Panc1 (cell line): ENCODE measurements at regions of chr2 and their contacts with region 1.

Region 1: GRCh38 chr2:85707304-85707703 is 13.1 kb downstream of the GNLY start:
- DNase-seq: peak; percentile 90
- ATAC-seq: peak; percentile 93
- H3K4me3 ChIP-seq: no peak overlapping the region
- H3K27ac ChIP-seq: no peak overlapping the region
- H3K4me1 ChIP-seq: peaks cover 6% of the 10 kb centered on the region; the same call in 1 of the 2 replicates
- H3K27me3 ChIP-seq: peaks cover 2% of the 10 kb centered on the region; the same call in 1 of the 2 replicates
- CTCF ChIP-seq: peak; percentile 88

Region 2: DNA sequence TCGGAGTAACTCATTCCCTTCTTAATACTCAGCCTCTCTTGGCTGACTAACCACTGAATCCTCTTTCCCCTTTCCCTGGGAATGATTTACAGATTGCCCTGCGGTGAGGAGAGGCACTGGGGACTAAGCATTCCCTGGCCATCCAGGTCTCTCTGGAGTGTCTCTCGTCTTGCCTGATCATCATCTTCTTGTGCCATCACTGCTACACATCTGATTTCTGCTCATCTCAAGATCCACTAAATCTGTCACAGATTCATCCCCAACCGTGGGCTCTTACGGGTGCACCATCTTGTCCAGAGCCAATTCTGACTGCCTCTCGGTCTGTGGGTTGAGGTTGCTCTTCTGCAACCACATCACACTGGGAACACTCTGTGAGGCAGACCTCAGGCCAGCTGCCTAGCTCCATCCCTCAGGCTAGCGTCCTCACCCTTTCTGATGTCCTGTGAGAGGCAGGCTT is 51.3 kb before region 1 on chr2:
- CTCF ChIA-PET with region 1: no interaction called
- POLR2A ChIA-PET with region 1: no interaction called
- in situ Hi-C with region 1: loop called (anchors 5 kb)
- intact Hi-C with region 1: no loop called
- DNase-seq: no peak
- ATAC-seq: no peak
- H3K4me3 ChIP-seq: no peak overlapping the region
- H3K27ac ChIP-seq: no peak overlapping the region
- H3K4me1 ChIP-seq: no peaks in the 10 kb centered on the region
- H3K27me3 ChIP-seq: no peaks in the 10 kb centered on the region
- CTCF ChIP-seq: no peak

Region 3: GRCh38 chr2:85678794-85679672 is 28.3 kb before region 1 on chr2:
- CTCF ChIA-PET with region 1: interaction called, 25 read pairs
- POLR2A ChIA-PET with region 1: no interaction called
- in situ Hi-C with region 1: no loop called
- intact Hi-C with region 1: loop called (anchors 2 kb)
- DNase-seq: no peak
- ATAC-seq: peak; percentile 96
- H3K4me3 ChIP-seq: 0 out of 4 replicates have a peak overlapping the region, but pooled peaks of 1 of the 2 experiments have one; percentile 13
- H3K27ac ChIP-seq: no peak overlapping the region
- H3K4me1 ChIP-seq: no peaks in the 10 kb centered on the region; the same call in 1 of the 2 replicates
- H3K27me3 ChIP-seq: no peaks in the 10 kb centered on the region
- CTCF ChIP-seq: peak; percentile 99

Region 4: DNA sequence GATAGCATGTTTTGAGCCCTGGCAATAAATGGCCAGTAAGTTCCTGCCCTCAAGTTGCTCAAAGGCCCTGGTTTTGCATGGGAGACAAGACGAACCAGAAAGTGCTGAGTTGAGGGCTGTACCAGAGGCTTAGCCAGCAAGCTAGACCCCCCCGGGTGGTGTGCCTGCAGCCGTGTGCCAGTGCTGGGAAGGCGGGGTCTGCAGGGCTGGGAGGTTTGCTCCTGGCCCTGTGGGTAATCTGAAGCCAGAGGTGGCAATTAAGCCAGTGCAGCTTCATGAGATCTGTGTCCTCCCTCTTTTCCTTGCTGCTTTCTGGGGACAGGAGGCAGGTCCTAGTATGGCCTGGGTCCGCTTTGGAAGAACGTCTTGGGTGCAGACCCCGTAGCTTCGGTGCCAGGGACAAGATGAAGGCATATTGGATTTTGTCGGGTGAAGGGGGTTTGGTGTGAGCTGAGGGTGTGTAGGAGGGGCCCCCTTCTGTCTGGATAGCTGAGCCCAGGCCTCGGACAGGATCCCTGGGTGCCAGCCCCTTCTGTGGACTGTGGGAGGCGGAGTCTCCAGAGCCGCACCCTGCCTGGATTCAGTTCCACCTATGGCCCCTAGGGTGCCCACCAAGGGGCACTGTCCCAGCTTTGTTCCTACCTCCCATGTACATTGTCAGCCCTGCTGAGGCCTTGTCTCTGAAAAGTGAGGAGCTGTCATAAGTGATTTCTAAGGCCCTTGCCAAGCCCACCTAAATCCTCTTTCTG is 62.1 kb after region 1 on chr2:
- CTCF ChIA-PET with region 1: no interaction called
- POLR2A ChIA-PET with region 1: no interaction called
- in situ Hi-C with region 1: no loop called
- intact Hi-C with region 1: no loop called
- DNase-seq: no peak
- ATAC-seq: peak; percentile 21; the same call in 1 of the 2 replicates
- H3K4me3 ChIP-seq: no peak overlapping the region
- H3K27ac ChIP-seq: peak overlapping the region; percentile 82
- H3K4me1 ChIP-seq: peaks cover 88% of the 10 kb centered on the region
- H3K27me3 ChIP-seq: no peaks in the 10 kb centered on the region
- CTCF ChIP-seq: no peak; the same call in 1 of the 2 replicates

Region 5: DNA sequence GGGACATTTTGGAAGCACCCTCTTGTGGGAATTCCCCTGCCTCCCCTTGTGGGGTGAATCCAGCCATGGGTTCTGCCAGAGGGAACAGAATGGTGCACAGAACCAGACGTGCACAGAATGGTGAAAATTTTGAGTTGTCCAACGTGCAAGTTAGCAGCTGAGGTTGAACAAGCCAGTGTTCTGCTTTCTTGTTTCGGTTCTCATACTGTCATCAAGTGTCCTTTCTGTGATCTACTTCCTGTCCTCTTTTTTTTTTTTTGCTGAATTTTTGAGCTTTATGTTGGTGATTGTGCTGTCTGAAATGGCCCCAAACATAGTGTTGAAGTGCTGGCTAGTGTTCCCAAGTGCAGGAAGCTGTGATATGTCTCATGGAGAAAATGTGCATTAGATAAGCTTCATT is 651.7 kb after region 1 on chr2:
- CTCF ChIA-PET with region 1: no interaction called
- POLR2A ChIA-PET with region 1: no interaction called
- in situ Hi-C with region 1: no loop called
- intact Hi-C with region 1: no loop called
- DNase-seq: no peak
- ATAC-seq: no peak
- H3K4me3 ChIP-seq: no peak overlapping the region
- H3K27ac ChIP-seq: no peak overlapping the region
- H3K4me1 ChIP-seq: no peaks in the 10 kb centered on the region
- H3K27me3 ChIP-seq: peaks cover 3% of the 10 kb centered on the region; the same call in 1 of the 2 replicates
- CTCF ChIP-seq: no peak